Thyroid gland (tissue), 4 donors: ENCODE measurements at regions of chr15 and their contacts with region 1.

Region 1: DNA sequence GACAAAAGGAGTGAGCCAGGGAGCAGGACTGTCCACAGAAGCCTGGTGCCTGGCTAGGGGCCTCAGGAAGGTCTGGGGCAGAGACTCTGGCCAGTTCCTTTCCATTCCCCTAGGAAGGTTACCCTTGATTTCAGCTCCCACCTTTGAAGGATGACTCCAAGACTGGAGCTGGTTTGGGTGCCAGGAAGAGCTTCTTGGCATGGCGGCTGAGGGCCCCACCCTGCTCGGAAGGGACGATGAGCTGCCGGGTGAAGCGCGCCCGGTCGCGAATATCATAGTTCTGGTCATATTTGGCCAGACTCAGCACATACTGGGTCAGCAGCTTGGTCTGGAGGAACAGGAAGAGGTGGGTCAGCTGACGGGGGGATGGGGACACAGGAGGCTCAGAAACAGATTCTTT is 19.4 kb upstream of the CPEB1 start:
- DNase-seq: no peak
- H3K4me3 ChIP-seq: no peak overlapping the region
- H3K27ac ChIP-seq: no peak overlapping the region
- H3K4me1 ChIP-seq: no peaks in the 10 kb centered on the region
- H3K27me3 ChIP-seq: no peaks in the 10 kb centered on the region
- CTCF ChIP-seq: no peak
- POLR2A ChIP-seq: no peak

Region 2: DNA sequence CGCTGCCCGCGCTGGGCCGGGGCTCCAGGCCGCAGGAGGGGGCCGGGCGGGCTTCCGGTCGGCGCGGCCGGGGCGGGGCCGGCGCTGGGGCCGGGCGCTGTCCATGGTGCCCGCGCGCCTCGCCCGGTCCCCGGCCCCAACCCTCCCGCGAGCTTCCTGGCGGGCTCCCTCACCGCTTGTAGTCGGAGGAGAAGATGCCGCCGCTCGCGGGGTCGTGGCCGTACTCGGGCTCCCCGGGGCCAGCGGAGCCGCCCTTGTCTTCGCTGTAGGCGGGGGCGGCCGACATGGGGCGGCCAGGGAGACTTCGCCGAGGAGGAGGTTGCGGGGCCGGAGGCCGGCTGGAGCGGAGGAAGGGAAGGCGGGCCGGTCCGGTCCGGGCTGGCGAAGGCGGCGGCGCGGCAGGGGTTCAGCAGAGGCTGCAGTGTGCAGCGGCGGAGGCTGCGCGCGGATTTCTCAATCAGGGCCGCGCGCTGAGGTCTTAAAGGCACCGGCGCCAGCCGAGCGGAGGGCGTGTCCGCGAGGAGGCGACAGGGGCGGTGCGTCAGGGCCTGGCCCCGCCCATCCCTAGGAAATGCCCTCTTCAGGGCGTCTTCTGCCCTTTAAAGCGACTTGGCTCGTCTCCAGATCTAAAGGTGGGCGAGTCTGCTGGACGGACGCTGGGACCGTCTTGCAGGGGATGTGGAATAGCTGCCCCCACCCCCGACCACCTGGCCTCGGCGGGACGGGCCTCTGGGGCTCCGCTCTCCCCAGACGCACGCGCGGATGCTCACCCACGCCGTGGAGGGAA is 43.0 kb after region 1 on chr15 and contains the start of gene AP3B2:
- intact Hi-C with region 1: loop called (anchors 5 kb)
- DNase-seq: peak; percentile 68 to 70
- H3K4me3 ChIP-seq: peak within 1 kb of the TSS in 2 of 3 donors; percentile 23 to 54
- H3K27ac ChIP-seq: peak within 1 kb of the TSS in 1 of 3 donors; percentile 30
- H3K4me1 ChIP-seq: peaks cover 6 to 10% of the 10 kb centered on the region in 2 donors
- H3K27me3 ChIP-seq: no peaks in the 10 kb centered on the region
- CTCF ChIP-seq: no peak
- POLR2A ChIP-seq: no peak
- total RNA-seq, gene AP3B2: 1.4 to 4.1 (median 2.1) TPM

Region 3: GRCh38 chr15:82737975-82738374 is 71.4 kb after region 1 on chr15:
- intact Hi-C with region 1: no loop called
- DNase-seq: no peak
- H3K4me3 ChIP-seq: no peak overlapping the region
- H3K27ac ChIP-seq: no peak overlapping the region
- H3K4me1 ChIP-seq: no peaks in the 10 kb centered on the region
- H3K27me3 ChIP-seq: no peaks in the 10 kb centered on the region
- CTCF ChIP-seq: no peak
- POLR2A ChIP-seq: no peak

Region 4: GRCh38 chr15:82963356-82964341 is 297.0 kb after region 1 on chr15:
- intact Hi-C with region 1: no loop called
- DNase-seq: no peak
- H3K4me3 ChIP-seq: no peak overlapping the region
- H3K27ac ChIP-seq: no peak overlapping the region
- H3K4me1 ChIP-seq: no peaks in the 10 kb centered on the region
- H3K27me3 ChIP-seq: no peaks in the 10 kb centered on the region
- CTCF ChIP-seq: no peak
- POLR2A ChIP-seq: no peak

Region 5: DNA sequence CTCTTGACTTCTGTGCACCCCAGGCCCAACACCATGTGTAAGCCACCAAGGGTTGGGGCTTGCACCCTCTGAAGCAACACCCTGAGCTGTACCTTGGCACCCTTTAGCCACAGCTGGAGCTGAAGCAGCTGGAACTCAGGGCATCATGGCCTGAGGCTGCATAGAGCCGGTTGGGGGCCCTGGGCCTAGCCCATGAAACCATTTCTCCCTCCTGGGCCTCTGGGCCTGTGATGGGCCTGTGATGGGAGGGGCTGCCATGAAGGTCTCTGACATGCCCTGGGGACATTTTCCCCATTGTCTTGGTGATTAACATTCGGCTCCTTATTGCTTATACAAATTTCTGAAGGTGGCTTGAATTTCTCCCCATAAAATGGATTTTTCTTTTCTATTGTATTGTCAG is 964.9 kb after region 1 on chr15:
- intact Hi-C with region 1: no loop called
- DNase-seq: no peak
- H3K4me3 ChIP-seq: no peak overlapping the region
- H3K27ac ChIP-seq: no peak overlapping the region
- H3K4me1 ChIP-seq: no peaks in the 10 kb centered on the region
- H3K27me3 ChIP-seq: no peaks in the 10 kb centered on the region
- CTCF ChIP-seq: no peak
- POLR2A ChIP-seq: no peak